SK-N-SH (cell line): ENCODE measurements at regions of chr9 and their contacts with region 1.

Region 1: DNA sequence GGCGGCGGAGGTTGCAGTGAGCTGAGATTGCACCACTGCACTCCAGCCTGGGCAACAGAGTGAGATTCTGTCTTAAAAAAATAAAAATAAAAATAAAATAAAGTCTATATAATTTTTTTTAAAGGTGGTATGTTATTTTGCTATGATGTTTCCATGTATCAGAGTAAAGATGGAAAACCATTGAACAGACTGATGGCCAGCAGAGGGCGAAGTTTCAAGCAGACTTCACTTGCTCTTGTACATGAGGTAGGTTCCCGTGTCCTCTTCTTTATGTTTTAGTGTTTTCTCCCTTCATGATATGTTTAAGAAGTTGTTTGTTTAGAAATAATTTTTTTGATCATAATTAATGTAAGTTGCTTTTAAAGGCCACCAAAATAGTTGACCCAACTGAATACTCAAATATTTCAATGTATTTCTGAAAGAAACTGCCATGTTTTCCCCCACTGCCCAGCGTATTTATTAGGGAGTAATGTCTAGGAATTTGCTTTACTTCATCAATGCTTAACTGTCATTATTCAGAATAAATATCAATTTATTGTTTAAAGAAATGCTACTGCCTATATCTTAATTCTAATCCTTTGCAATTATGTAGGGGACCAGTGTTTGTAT is 146.4 kb downstream of the HACD4 start:
- DNase-seq: peak; percentile 17
- H3K4me3 ChIP-seq: no peak overlapping the region; a peak in 1 of 4 replicates
- H3K27ac ChIP-seq: no peak overlapping the region
- H3K4me1 ChIP-seq: no peaks in the 10 kb centered on the region
- H3K27me3 ChIP-seq: no peaks in the 10 kb centered on the region
- CTCF ChIP-seq: peak; percentile 68
- EP300 ChIP-seq: no peak
- RAD21 ChIP-seq: peak; percentile 68

Region 2: DNA sequence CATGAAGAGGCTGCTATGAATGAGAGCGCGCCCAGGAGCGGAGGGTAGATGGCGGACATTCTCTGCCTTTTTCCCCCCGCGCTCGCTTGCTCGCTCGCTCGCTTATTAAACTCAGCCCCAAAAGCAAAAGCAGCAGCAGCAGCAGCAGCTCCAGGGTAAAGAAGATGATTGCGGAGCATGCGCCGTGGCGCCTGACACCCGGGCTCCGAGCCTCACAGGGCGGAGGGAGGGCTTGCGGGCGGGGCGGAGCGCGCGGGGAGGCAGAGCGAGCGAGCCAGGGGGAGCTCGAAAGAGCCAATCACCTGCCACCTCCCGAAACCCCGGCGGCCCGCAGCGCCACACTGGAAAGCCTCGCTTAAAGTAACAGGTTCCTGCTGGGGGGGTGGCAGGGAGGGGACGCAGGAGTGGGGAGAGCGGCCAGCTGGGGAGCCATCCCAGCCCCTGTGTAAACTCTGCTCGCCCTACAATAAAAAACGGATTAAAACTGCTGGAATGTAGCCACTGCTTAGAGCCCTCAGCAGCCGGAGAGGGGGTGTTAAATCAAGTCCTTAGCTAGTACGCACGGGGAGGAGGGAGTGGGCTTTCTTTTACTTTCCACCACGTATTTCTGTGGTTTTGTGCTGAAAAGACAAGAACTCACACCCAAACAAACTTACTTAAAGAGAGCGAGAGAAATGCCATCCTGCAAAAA is 262.6 kb before region 1 on chr9 and contains the start of gene MLLT3:
- CTCF ChIA-PET with region 1: interaction called, 21 read pairs
- POLR2A ChIA-PET with region 1: no interaction called
- DNase-seq: peak; percentile 96
- H3K4me3 ChIP-seq: peak within 1 kb of the TSS; percentile 81 to 100
- H3K27ac ChIP-seq: peak within 1 kb of the TSS; percentile 79 to 90
- H3K4me1 ChIP-seq: peaks cover 6 to 8% of the 10 kb centered on the region in 2 experiments; a peak in 3 of 4 replicates
- H3K27me3 ChIP-seq: no peaks in the 10 kb centered on the region
- CTCF ChIP-seq: no peak
- EP300 ChIP-seq: no peak
- RAD21 ChIP-seq: 0 out of 2 replicates have a peak, but pooled peaks have one; percentile 4
- polyA plus RNA-seq, gene MLLT3: 3.9 and 6.2 TPM in 2 replicates

Region 3: DNA sequence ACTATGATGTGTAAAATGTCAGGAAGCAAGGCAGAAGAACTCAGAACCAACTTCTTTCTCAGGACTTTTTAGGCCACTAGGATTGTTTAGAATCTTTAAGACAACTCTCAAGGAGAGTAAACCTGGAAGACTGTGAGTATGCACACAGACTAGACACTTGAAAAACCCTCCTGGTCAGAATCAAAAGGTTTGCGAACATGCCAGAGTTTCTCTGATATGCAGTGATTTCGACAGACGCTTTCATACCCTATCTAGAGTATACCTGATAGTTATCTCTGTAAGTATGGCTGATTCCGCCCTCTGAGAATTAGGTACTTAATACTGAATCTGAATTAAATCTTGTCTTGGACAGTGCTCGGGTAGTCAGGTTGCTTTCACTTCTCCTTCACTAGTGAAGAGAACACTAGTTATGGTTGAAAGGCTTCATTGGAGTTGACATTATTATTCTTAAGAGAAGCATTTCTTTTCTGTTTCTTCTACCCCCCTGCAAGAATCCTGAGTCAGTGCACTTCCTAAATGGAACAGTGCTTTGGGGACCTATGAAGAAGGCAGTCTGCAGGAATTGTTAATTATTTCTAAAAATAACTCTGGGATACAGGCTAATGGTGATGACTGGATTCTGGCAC is 11.7 kb before region 1 on chr9:
- CTCF ChIA-PET with region 1: interaction called, 19 read pairs
- POLR2A ChIA-PET with region 1: no interaction called
- DNase-seq: no peak
- H3K4me3 ChIP-seq: no peak overlapping the region; a peak in 1 of 4 replicates
- H3K27ac ChIP-seq: peak overlapping the region in 1 of 2 experiments; percentile 84; a peak in 2 of 4 replicates
- H3K4me1 ChIP-seq: peaks cover 0 to 5% of the 10 kb centered on the region in 2 experiments; a peak in 1 of 4 replicates
- H3K27me3 ChIP-seq: no peaks in the 10 kb centered on the region
- CTCF ChIP-seq: no peak
- EP300 ChIP-seq: no peak
- RAD21 ChIP-seq: no peak

Region 4: GRCh38 chr9:20898885-20899554 is 13.9 kb after region 1 on chr9:
- CTCF ChIA-PET with region 1: interaction called, 10 read pairs
- POLR2A ChIA-PET with region 1: no interaction called
- DNase-seq: peak; percentile 28
- H3K4me3 ChIP-seq: 0 out of 4 replicates have a peak overlapping the region, but pooled peaks of 1 of the 2 experiments have one; percentile 6
- H3K27ac ChIP-seq: peak overlapping the region; percentile 7 to 82; a peak in 3 of 4 replicates
- H3K4me1 ChIP-seq: peaks cover 8 to 20% of the 10 kb centered on the region in 2 experiments; a peak in 3 of 4 replicates
- H3K27me3 ChIP-seq: no peaks in the 10 kb centered on the region
- CTCF ChIP-seq: no peak
- EP300 ChIP-seq: peak in 1 of 2 experiments; percentile 89; a peak in 2 of 4 replicates
- RAD21 ChIP-seq: no peak

Region 5: GRCh38 chr9:20941174-20941690 is 56.1 kb after region 1 on chr9:
- CTCF ChIA-PET with region 1: interaction called, 41 read pairs
- POLR2A ChIA-PET with region 1: no interaction called
- DNase-seq: peak; percentile 63
- H3K4me3 ChIP-seq: peak overlapping the region in 1 of 2 experiments; percentile 27; a peak in 1 of 4 replicates
- H3K27ac ChIP-seq: no peak overlapping the region
- H3K4me1 ChIP-seq: no peaks in the 10 kb centered on the region
- H3K27me3 ChIP-seq: no peaks in the 10 kb centered on the region
- CTCF ChIP-seq: peak; percentile 93
- EP300 ChIP-seq: no peak
- RAD21 ChIP-seq: peak; percentile 97

Region 6: DNA sequence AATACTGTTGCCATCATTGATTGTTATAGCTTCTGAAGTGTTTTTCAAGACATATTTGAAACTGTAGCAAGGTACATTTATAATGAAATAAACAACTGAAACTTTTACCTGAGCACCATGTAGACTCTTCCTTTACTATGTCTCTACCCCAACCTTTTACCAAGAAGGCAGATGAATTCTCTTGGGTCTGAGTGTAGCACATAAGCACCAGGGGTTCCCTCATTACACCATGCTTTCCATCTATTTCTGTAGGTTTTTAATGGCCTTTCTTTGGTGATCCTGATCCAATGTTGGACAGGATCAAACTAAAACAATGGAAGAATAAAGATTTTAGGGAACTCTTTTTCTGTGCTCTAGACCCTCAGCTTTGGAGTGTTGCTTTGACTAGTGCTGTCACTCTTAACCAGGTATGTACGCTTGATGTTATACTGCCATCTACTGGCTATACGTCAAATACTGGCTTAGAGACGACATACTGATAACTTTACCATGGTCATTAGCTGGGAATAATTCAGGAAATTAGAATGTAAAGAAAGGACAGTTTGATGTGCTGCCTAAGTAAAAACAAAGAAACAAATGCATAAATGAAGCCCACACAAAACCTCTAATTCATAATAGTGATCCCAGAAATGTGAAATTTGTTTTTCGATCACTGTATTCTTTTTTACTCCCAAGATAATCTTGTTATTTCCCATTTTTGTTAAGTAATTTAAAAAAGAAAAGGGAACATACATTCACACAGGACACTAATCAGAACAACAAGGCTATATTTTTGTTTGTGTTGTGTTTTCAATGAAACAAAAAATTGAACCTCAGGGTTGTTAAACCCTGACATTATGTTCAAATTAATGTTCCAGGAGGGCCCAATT is 225.9 kb after region 1 on chr9:
- CTCF ChIA-PET with region 1: interaction called, 46 read pairs
- POLR2A ChIA-PET with region 1: no interaction called
- DNase-seq: peak; percentile 58
- H3K4me3 ChIP-seq: no peak overlapping the region
- H3K27ac ChIP-seq: no peak overlapping the region
- H3K4me1 ChIP-seq: no peaks in the 10 kb centered on the region
- H3K27me3 ChIP-seq: no peaks in the 10 kb centered on the region
- CTCF ChIP-seq: peak; percentile 91
- EP300 ChIP-seq: no peak
- RAD21 ChIP-seq: peak; percentile 96

Region 7: DNA sequence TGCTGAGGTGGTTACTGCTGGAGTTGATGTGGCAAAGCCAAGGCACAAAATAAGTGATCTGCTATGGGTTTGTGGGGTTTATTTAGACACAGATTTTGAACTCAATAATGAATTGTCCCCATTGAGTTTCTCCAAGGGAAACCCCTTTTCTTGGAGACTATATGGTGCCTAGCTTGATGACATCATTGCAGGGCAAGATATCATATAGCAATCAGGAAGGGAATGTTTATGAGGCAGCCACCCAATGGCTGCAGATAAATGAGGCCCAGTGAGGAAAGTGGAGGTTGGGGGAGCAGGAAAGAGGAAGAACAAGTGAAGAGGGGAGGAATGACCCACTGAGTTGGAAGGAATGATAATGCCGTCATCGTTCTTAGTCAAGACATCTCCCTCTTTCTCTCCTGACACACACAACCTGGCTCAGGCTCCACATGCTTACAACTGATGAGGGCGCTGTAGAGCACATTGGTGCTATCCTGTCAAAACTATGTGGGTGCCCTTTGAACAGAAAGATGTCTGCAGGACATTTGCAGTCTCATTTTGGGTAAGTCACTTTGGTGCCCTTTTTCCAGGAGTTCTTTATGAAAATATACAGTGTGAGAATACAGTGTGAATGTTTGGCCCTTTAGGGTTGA is 250.5 kb after region 1 on chr9:
- CTCF ChIA-PET with region 1: no interaction called
- POLR2A ChIA-PET with region 1: no interaction called
- DNase-seq: no peak
- H3K4me3 ChIP-seq: no peak overlapping the region
- H3K27ac ChIP-seq: no peak overlapping the region
- H3K4me1 ChIP-seq: no peaks in the 10 kb centered on the region
- H3K27me3 ChIP-seq: no peaks in the 10 kb centered on the region
- CTCF ChIP-seq: no peak
- EP300 ChIP-seq: no peak
- RAD21 ChIP-seq: no peak

Region 8: DNA sequence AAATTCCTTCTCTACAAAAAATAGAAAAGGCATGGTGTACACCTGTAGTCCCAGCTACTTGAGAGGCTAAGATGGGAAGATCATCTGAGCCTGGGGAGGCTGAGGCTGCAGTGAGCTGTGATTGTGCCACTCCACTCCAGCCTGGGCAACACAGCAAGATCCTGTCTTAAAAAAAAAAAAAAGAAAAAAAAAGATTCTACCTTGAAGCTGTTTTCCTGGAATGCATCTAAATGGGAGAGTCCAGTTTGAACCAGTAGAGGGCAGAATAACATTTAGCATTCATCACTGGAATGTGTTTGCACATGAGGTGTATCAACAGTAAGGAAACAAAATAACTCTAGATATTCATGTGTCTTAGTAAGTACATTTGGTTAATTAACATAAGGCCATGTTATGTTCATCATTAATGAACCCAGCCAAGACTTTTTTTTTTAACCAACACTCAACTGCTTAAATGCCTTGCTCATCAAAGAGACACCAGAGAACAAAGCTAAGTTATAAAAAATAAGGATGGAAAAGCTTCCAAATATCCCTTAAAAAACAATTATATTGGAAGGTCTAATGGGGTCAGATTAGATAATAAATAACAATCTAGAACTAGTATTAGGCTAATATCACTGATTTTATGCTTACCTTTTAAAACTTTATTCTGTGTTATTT is 580.9 kb after region 1 on chr9:
- CTCF ChIA-PET with region 1: no interaction called
- POLR2A ChIA-PET with region 1: no interaction called
- DNase-seq: peak; percentile 32
- H3K4me3 ChIP-seq: no peak overlapping the region; a peak in 1 of 4 replicates
- H3K27ac ChIP-seq: no peak overlapping the region
- H3K4me1 ChIP-seq: no peaks in the 10 kb centered on the region
- H3K27me3 ChIP-seq: no peaks in the 10 kb centered on the region; the same call in 1 of the 2 replicates
- CTCF ChIP-seq: peak; percentile 85
- EP300 ChIP-seq: no peak
- RAD21 ChIP-seq: peak; percentile 67